ENCODE measurements at regions of chr1 and their contacts with region 1.

Region 1: GRCh38 chr1:235050911-235051360 is 77.7 kb downstream of the TOMM20 start:
- DNase-seq: peak in 1 of 4 donors; percentile 27
- ATAC-seq: peak; percentile 41
- H3K4me3 ChIP-seq: no peak overlapping the region
- H3K27ac ChIP-seq: peak overlapping the region in 3 of 4 donors; percentile 1 to 42 (median 41)
- H3K4me1 ChIP-seq: peaks cover 4% of the 10 kb centered on the region
- H3K27me3 ChIP-seq: no peaks in the 10 kb centered on the region
- CTCF ChIP-seq: no peak
- POLR2A ChIP-seq: no peak

Region 2: DNA sequence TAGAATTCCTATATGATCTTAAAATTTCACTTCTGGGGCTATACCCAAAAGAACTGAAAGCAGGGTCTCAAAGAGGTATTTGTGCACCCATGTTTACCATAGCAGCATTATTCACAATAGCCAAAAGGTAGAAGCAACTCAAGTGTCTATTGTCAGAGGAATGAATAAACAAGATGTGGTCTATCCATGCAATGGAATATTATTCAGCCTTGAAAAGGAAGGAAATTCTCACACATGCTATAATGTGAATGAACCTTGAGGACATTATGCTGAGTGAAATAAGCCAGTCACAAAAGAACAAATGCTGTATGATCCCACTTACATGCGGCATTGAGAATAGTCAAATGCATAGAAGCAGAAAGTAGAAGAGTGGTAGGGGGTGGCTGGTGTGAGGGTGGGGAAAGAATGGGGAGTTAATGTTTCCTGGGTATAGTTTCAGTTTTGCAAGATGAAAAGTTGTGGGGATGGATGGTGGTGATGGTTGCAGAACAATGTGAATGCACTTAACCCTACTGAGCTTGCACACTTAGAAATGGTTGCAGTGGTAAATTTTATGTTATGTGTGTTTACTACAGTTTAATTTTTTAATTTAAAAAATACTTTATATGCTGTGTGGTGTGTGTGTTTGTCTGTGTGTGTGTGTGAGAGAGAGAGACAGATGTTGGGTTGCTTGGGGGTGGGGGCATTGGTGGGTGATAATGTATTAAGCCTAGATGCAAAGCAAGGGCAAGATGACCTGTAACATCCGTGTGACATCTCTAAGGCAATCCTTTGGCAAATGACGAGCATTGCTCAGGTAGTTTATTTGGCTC is 44.6 kb before region 1 on chr1:
- intact Hi-C with region 1: loop called (anchors 10 kb)
- DNase-seq: no peak
- ATAC-seq: no peak
- H3K4me3 ChIP-seq: no peak overlapping the region
- H3K27ac ChIP-seq: no peak overlapping the region
- H3K4me1 ChIP-seq: no peaks in the 10 kb centered on the region
- H3K27me3 ChIP-seq: no peaks in the 10 kb centered on the region
- CTCF ChIP-seq: no peak
- POLR2A ChIP-seq: no peak